ENCODE measurements at regions of chr5 and their contacts with region 1.

Region 1: GRCh38 chr5:153496835-153497234 is 6.4 kb downstream of the GRIA1 start:
- DNase-seq: peak; percentile 75
- H3K4me3 Mint-ChIP-seq: no peak overlapping the region
- H3K27ac Mint-ChIP-seq: no peak overlapping the region
- H3K4me1 Mint-ChIP-seq: no peaks in the 10 kb centered on the region
- H3K27me3 Mint-ChIP-seq: no peaks in the 10 kb centered on the region
- CTCF ChIP-seq: peak; percentile 97

Region 2: GRCh38 chr5:152532714-152533113 is 964.1 kb before region 1 on chr5:
- CTCF ChIA-PET with region 1: interaction called, 23 read pairs
- POLR2A ChIA-PET with region 1: no interaction called
- intact Hi-C with region 1: loop called (anchors 2 kb)
- DNase-seq: peak; percentile 75
- H3K4me3 Mint-ChIP-seq: no peak overlapping the region
- H3K27ac Mint-ChIP-seq: peak overlapping the region; percentile 24
- H3K4me1 Mint-ChIP-seq: no peaks in the 10 kb centered on the region
- H3K27me3 Mint-ChIP-seq: no peaks in the 10 kb centered on the region
- CTCF ChIP-seq: peak; percentile 80

Region 3: GRCh38 chr5:152838241-152838786 is 658.5 kb before region 1 on chr5:
- CTCF ChIA-PET with region 1: no interaction called
- POLR2A ChIA-PET with region 1: no interaction called
- intact Hi-C with region 1: no loop called
- DNase-seq: no peak
- H3K4me3 Mint-ChIP-seq: no peak overlapping the region
- H3K27ac Mint-ChIP-seq: no peak overlapping the region
- H3K4me1 Mint-ChIP-seq: no peaks in the 10 kb centered on the region
- H3K27me3 Mint-ChIP-seq: no peaks in the 10 kb centered on the region
- CTCF ChIP-seq: no peak

Region 4: DNA sequence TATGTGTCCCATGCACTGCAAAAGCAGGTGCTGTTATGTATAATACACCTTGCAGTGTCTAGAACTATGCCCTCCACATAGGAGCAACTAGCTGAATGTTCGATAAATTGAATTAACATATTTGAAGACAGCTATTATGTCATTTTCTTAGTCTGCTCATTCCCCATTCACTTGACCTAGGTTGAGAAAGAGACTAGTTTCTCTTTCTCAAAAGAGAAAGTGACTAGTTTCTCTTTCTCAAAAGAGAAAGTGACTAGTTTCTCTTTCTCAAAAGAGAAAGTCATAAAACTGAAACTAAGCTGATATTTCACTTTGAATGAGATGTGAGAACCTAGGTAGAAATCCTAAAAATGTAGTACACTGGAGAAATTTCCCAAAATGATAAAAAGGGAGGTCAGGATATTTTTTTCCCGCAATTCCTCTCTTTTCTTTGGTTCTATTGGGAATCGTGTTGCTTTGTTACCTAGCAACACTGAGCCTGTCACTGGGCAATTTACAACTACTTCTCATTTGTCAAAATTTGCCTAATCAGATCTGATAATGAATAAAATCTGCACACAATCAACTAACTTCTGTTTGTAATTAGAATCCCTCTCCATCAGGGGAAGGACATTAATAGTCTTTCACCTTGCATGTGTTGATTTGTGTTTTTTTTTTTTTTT is 138.4 kb before region 1 on chr5:
- CTCF ChIA-PET with region 1: no interaction called
- POLR2A ChIA-PET with region 1: no interaction called
- intact Hi-C with region 1: no loop called
- DNase-seq: no peak
- H3K4me3 Mint-ChIP-seq: no peak overlapping the region
- H3K27ac Mint-ChIP-seq: no peak overlapping the region
- H3K4me1 Mint-ChIP-seq: peaks cover 12% of the 10 kb centered on the region
- H3K27me3 Mint-ChIP-seq: no peaks in the 10 kb centered on the region
- CTCF ChIP-seq: no peak

Region 5: DNA sequence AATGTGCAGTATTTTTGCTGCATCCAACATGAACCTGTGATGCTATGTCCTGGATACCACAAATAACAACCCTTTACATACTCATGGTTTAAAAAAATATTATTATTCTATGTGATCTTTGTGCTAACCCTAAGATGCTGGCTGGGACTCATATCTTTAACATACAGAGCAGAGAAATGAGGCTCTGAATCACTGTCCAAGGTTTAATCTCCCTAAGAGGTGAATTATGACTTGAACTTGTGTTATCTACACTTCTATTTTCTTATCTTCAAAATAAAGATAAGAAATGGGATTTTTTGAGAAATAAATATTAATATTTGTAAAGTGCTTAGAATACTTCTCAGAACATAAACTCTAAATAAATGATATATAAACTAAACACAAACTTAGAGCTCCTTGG is 75.2 kb before region 1 on chr5:
- CTCF ChIA-PET with region 1: no interaction called
- POLR2A ChIA-PET with region 1: no interaction called
- intact Hi-C with region 1: no loop called
- DNase-seq: no peak
- H3K4me3 Mint-ChIP-seq: no peak overlapping the region
- H3K27ac Mint-ChIP-seq: no peak overlapping the region
- H3K4me1 Mint-ChIP-seq: no peaks in the 10 kb centered on the region
- H3K27me3 Mint-ChIP-seq: no peaks in the 10 kb centered on the region
- CTCF ChIP-seq: no peak

Region 6: GRCh38 chr5:153546566-153546965 is 49.7 kb after region 1 on chr5:
- CTCF ChIA-PET with region 1: interaction called, 12 read pairs
- POLR2A ChIA-PET with region 1: no interaction called
- intact Hi-C with region 1: loop called (anchors 5 kb)
- DNase-seq: peak; percentile 63
- H3K4me3 Mint-ChIP-seq: no peak overlapping the region
- H3K27ac Mint-ChIP-seq: peak overlapping the region; percentile 29
- H3K4me1 Mint-ChIP-seq: peaks cover 23% of the 10 kb centered on the region
- H3K27me3 Mint-ChIP-seq: no peaks in the 10 kb centered on the region
- CTCF ChIP-seq: no peak

Region 7: GRCh38 chr5:153629027-153629895 is 132.4 kb after region 1 on chr5:
- CTCF ChIA-PET with region 1: interaction called, 25 read pairs
- POLR2A ChIA-PET with region 1: no interaction called
- intact Hi-C with region 1: loop called (anchors 1 kb)
- DNase-seq: peak; percentile 96
- H3K4me3 Mint-ChIP-seq: no peak overlapping the region
- H3K27ac Mint-ChIP-seq: no peak overlapping the region
- H3K4me1 Mint-ChIP-seq: peaks cover 11% of the 10 kb centered on the region
- H3K27me3 Mint-ChIP-seq: no peaks in the 10 kb centered on the region
- CTCF ChIP-seq: peak; percentile 56

Region 8: DNA sequence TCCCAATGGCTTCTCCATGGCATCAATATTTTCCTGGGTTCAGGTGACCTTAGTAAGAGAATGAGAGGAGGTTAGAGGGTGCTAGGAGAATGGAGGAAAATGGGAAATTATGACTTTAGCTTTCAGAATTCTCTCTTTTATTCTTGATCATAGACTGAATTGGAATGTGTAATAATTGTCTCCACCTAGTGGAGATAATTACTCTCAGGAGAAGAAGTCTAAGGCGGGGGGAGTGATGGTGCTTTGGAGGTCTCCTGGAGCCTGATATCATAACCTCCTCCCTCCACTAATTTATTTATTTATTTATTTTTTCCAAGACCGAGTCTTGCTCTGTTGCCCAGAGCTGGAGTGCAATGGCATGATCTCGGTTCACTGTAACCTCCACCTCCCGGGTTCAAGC is 214.9 kb after region 1 on chr5:
- CTCF ChIA-PET with region 1: interaction called, 5 read pairs
- POLR2A ChIA-PET with region 1: no interaction called
- intact Hi-C with region 1: loop called (anchors 1 kb)
- DNase-seq: no peak
- H3K4me3 Mint-ChIP-seq: no peak overlapping the region
- H3K27ac Mint-ChIP-seq: no peak overlapping the region
- H3K4me1 Mint-ChIP-seq: no peaks in the 10 kb centered on the region
- H3K27me3 Mint-ChIP-seq: no peaks in the 10 kb centered on the region
- CTCF ChIP-seq: peak; percentile 23

Region 9: GRCh38 chr5:153959134-153959957 is 462.5 kb after region 1 on chr5:
- CTCF ChIA-PET with region 1: interaction called, 440 read pairs
- POLR2A ChIA-PET with region 1: interaction called, 15 read pairs
- intact Hi-C with region 1: no loop called
- DNase-seq: peak; percentile 24
- H3K4me3 Mint-ChIP-seq: no peak overlapping the region
- H3K27ac Mint-ChIP-seq: no peak overlapping the region
- H3K4me1 Mint-ChIP-seq: peaks cover 7% of the 10 kb centered on the region
- H3K27me3 Mint-ChIP-seq: no peaks in the 10 kb centered on the region
- CTCF ChIP-seq: no peak